ENCODE measurements at regions of chr6 and their contacts with region 1.

Region 1: GRCh38 chr6:26031595-26032339 is 55.5 kb upstream of the HFE start:
- DNase-seq: peak; percentile 89
- H3K4me3 ChIP-seq: peak overlapping the region; percentile 73 to 84
- H3K27ac ChIP-seq: peak overlapping the region; percentile 92 to 99
- H3K4me1 ChIP-seq: peaks cover 10 to 23% of the 10 kb centered on the region in 2 experiments; a peak in 3 of 4 replicates
- H3K27me3 ChIP-seq: no peaks in the 10 kb centered on the region
- CTCF ChIP-seq: peak; percentile 30
- EP300 ChIP-seq: peak; percentile 52 to 61; a peak in 2 of 4 replicates
- RAD21 ChIP-seq: no peak

Region 2: DNA sequence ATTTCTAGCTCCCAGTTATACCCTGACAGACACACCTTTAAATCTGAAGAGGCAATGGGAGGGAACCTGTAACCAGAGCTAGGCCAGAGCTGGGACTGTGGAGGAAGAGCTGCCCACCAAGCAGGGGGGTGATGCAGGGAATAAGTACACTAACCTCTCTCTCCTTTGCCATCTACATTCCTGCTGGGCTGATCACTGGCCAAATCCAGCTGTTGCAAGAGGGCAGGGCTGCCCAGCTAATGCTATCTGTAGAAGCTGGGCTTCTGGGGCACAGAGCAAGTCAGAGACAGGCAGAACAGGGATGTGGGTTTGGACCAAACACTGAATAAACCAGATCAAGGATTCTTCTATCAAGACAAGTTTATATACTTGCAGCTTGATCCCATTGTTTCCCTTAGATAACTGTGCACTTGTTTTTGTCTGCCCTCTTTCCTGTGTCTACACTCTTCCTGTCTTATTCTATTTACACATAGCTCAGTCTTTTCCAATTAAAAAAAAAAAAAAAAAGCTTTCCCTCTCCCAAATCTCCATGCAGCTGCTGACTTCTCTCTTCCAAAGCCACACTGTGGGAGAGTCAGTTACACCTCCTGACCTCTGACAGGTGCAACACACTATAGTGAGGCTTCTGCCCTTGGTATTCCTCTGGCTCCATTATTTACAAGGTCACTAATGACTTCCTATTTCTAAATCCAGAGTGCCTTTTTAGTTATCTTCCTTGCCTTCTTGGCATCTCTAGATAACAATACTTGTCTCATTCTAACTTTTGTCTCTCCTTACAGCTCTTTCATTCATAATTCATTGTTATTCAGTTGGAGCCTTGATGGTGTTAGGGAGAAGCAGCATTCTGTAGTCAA is 25.5 kb before region 1 on chr6:
- CTCF ChIA-PET with region 1: no interaction called
- POLR2A ChIA-PET with region 1: no interaction called
- DNase-seq: no peak
- H3K4me3 ChIP-seq: no peak overlapping the region
- H3K27ac ChIP-seq: no peak overlapping the region
- H3K4me1 ChIP-seq: no peaks in the 10 kb centered on the region; a peak in 1 of 4 replicates
- H3K27me3 ChIP-seq: no peaks in the 10 kb centered on the region
- CTCF ChIP-seq: no peak
- EP300 ChIP-seq: no peak
- RAD21 ChIP-seq: no peak

Region 3: DNA sequence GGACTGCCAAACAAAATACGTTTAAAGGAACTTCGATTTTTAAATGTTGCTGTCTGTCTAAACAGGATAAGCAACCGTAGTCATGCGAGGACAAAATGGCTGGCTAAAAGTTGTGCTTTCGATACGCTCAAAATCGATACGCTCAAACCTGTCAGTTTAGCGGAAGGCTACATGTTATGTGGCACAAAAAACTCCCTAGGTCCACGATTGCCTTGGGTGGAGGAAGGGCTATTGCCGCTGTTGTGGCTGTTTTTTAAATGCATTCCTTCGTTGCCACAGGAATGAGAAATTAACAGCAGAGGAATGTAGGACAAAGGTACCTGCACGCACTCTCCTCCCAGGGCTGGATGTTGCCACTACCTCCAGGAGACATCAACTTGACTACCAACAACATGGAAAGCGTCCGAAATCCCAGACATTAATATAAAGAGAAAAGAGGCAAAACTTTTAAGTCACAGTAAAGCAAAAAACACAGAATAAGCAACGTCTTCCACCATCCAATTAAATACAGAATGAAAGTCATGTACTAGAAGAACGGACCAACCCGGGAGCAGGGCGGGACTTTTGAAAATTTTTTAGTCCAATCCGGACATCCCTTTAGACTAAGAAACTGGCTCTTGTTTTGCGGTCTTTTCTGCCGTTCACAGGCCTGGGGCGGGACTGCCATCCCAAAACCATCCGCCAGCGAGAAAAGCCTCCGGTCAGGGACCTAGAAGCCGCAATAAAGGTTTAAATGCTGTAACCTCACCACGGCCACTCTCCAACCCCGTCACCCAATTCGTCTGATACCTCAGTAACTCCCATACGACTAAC is 23.3 kb after region 1 on chr6:
- CTCF ChIA-PET with region 1: interaction called, 3 read pairs
- POLR2A ChIA-PET with region 1: interaction called, 16 read pairs
- DNase-seq: peak; percentile 57
- H3K4me3 ChIP-seq: peak overlapping the region; percentile 79 to 80
- H3K27ac ChIP-seq: peak overlapping the region; percentile 97 to 98
- H3K4me1 ChIP-seq: peaks cover 0 to 7% of the 10 kb centered on the region in 2 experiments; a peak in 3 of 4 replicates
- H3K27me3 ChIP-seq: no peaks in the 10 kb centered on the region
- CTCF ChIP-seq: no peak
- EP300 ChIP-seq: no peak; a peak in 1 of 4 replicates
- RAD21 ChIP-seq: no peak

Region 4: GRCh38 chr6:26103770-26104456 is 72.1 kb after region 1 on chr6:
- CTCF ChIA-PET with region 1: interaction called, 5 read pairs
- POLR2A ChIA-PET with region 1: interaction called, 20 read pairs
- DNase-seq: peak; percentile 69
- H3K4me3 ChIP-seq: peak overlapping the region; percentile 55 to 65
- H3K27ac ChIP-seq: peak overlapping the region; percentile 85 to 97
- H3K4me1 ChIP-seq: peaks cover 7 to 17% of the 10 kb centered on the region in 2 experiments
- H3K27me3 ChIP-seq: no peaks in the 10 kb centered on the region
- CTCF ChIP-seq: peak; percentile 62
- EP300 ChIP-seq: peak; percentile 91 to 97
- RAD21 ChIP-seq: no peak

Region 5: DNA sequence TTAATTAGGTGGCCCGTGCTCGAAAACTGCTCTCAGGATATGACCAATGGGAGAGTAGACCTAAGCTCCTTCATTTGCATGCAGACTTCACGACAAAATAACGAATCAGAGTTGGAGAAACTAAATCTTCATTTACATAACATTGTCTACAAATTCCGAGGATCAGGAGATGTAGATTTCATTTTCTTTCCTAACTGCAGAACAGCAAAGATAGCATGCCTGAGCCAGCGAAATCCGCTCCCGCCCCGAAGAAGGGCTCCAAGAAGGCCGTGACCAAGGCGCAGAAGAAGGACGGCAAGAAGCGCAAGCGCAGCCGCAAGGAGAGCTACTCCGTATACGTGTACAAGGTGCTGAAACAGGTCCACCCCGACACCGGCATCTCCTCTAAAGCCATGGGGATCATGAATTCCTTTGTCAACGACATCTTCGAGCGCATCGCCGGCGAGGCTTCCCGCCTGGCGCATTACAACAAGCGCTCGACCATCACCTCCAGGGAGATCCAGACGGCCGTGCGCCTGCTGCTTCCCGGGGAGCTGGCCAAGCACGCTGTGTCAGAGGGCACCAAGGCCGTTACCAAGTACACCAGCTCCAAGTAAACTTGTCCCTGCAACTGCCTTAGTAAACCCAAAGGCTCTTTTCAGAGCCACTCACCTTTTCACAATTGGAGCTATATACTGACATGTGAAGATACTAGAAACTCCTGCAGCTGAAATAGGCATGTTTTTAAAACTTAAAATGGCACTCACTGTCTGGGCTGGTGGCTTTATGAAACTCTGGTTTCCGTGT is 152.0 kb after region 1 on chr6:
- CTCF ChIA-PET with region 1: no interaction called
- POLR2A ChIA-PET with region 1: interaction called, 27 read pairs
- DNase-seq: peak; percentile 71
- H3K4me3 ChIP-seq: peak overlapping the region; percentile 49 to 56
- H3K27ac ChIP-seq: peak overlapping the region; percentile 62 to 97
- H3K4me1 ChIP-seq: peaks cover 4 to 6% of the 10 kb centered on the region in 2 experiments; a peak in 2 of 4 replicates
- H3K27me3 ChIP-seq: no peaks in the 10 kb centered on the region
- CTCF ChIP-seq: no peak
- EP300 ChIP-seq: peak in 1 of 2 experiments; percentile 39; a peak in 1 of 4 replicates
- RAD21 ChIP-seq: no peak

Region 6: GRCh38 chr6:27864906-27865849 is 1833.4 kb after region 1 on chr6:
- CTCF ChIA-PET with region 1: no interaction called
- POLR2A ChIA-PET with region 1: interaction called, 22 read pairs
- DNase-seq: peak; percentile 85
- H3K4me3 ChIP-seq: peak overlapping the region; percentile 47 to 80
- H3K27ac ChIP-seq: peak overlapping the region; percentile 80 to 97
- H3K4me1 ChIP-seq: peaks cover 0 to 20% of the 10 kb centered on the region in 2 experiments; a peak in 2 of 4 replicates
- H3K27me3 ChIP-seq: no peaks in the 10 kb centered on the region
- CTCF ChIP-seq: no peak
- EP300 ChIP-seq: no peak; a peak in 1 of 4 replicates
- RAD21 ChIP-seq: no peak

Region 7: DNA sequence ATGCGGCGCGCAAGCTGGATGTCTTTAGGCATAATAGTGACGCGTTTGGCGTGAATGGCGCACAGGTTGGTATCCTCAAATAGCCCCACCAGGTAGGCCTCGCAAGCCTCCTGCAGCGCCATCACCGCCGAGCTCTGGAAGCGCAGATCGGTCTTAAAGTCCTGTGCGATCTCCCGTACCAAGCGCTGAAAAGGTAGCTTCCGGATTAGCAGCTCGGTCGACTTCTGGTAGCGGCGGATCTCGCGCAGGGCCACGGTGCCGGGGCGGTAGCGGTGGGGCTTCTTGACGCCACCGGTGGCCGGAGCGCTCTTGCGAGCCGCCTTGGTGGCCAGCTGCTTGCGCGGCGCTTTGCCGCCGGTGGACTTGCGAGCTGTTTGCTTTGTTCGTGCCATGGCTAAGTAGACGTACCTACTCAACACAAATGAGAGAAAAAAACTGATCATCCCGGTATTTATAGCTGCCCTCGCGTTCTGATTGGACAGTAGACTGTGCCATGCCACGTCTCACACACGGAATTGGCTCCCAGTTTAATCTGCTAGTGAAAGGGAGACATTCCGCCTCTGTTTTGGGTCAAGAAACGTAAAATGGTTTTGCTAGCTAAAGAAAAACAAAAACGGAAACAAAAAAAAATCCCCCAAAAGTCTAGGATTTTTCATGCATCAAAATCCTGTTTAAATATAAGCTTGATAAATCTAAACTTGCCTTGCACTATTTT is 1840.3 kb after region 1 on chr6:
- CTCF ChIA-PET with region 1: no interaction called
- POLR2A ChIA-PET with region 1: interaction called, 22 read pairs
- DNase-seq: peak; percentile 91
- H3K4me3 ChIP-seq: peak overlapping the region; percentile 68 to 71
- H3K27ac ChIP-seq: peak overlapping the region; percentile 80 to 97
- H3K4me1 ChIP-seq: peaks cover 0 to 10% of the 10 kb centered on the region in 2 experiments; a peak in 3 of 4 replicates
- H3K27me3 ChIP-seq: no peaks in the 10 kb centered on the region
- CTCF ChIP-seq: peak; percentile 39
- EP300 ChIP-seq: no peak
- RAD21 ChIP-seq: no peak